Testis (tissue), 5 donors: ENCODE measurements at regions of chr2 and their contacts with region 1.

Region 1: GRCh38 chr2:21317131-21317530 is 193.4 kb downstream of the TDRD15 start:
- DNase-seq: peak; percentile 85
- H3K4me3 ChIP-seq: no peak overlapping the region
- H3K27ac ChIP-seq: no peak overlapping the region
- H3K4me1 ChIP-seq: peaks cover 9% of the 10 kb centered on the region
- H3K27me3 ChIP-seq: no peaks in the 10 kb centered on the region
- CTCF ChIP-seq: peak; percentile 73 to 91 (median 75)
- POLR2A ChIP-seq: no peak

Region 2: GRCh38 chr2:20429528-20429927 is 887.6 kb before region 1 on chr2:
- intact Hi-C with region 1: no loop called
- DNase-seq: no peak
- H3K4me3 ChIP-seq: no peak overlapping the region
- H3K27ac ChIP-seq: no peak overlapping the region
- H3K4me1 ChIP-seq: no peaks in the 10 kb centered on the region
- H3K27me3 ChIP-seq: no peaks in the 10 kb centered on the region
- CTCF ChIP-seq: no peak
- POLR2A ChIP-seq: no peak

Region 3: GRCh38 chr2:21175895-21176646 is 141.1 kb before region 1 on chr2:
- intact Hi-C with region 1: loop called (anchors 5 kb)
- DNase-seq: peak; percentile 17
- H3K4me3 ChIP-seq: no peak overlapping the region
- H3K27ac ChIP-seq: no peak overlapping the region
- H3K4me1 ChIP-seq: peaks cover 3% of the 10 kb centered on the region
- H3K27me3 ChIP-seq: no peaks in the 10 kb centered on the region
- CTCF ChIP-seq: peak; percentile 40 to 67 (median 46)
- POLR2A ChIP-seq: no peak